H1 (cell line): ENCODE measurements at regions of chr17 and their contacts with region 1.

Region 1: DNA sequence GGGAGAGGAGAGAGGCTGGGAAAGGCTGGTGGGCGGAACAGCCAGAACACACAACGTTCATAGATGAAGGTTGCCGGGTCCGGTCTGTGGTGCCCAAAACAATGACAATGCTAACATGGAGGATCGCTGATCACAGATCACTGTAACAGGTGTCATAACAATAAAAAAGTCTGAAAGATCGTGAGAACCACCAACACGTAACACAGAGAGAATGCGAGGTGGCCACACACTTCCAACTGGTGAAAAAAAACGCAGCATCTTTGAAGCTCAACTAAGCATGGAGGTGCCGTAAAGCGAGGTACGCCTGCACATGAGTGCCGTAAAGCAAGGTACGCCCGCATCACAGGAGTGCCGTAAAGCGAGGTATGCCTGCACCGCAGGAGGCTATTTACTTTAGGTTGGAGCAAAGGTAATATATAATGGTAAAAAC is 42.3 kb downstream of the ABR start:
- DNase-seq: no peak
- H3K4me3 ChIP-seq: no peak overlapping the region
- H3K27ac ChIP-seq: no peak overlapping the region
- H3K4me1 ChIP-seq: no peaks in the 10 kb centered on the region
- H3K27me3 ChIP-seq: no peaks in the 10 kb centered on the region
- CTCF ChIP-seq: no peak
- EP300 ChIP-seq: no peak
- POLR2A ChIP-seq: no peak
- RAD21 ChIP-seq: no peak

Region 2: DNA sequence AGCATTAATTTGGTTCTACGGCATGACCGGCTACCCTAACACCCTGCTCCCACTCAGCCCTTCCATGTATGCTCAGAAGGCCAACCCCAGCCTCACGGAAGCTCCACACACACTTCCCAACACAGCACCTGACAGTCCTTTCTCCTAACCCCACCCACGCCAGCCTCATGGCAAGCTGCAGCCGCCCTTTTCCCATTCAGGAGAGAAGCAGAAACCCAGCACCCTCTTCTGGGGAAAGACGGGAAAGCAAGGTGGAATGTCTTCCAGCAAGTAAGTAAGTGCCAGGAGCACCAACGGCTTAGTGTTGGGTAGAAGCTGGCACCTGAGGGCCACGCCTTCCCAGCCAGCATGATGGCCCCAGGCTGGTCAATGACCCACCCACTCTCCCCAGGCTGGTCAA is 10.2 kb after region 1 on chr17:
- CTCF ChIA-PET with region 1: interaction called, 28 read pairs
- POLR2A ChIA-PET with region 1: interaction called, 3 read pairs
- DNase-seq: peak; percentile 60 to 87
- H3K4me3 ChIP-seq: no peak overlapping the region
- H3K27ac ChIP-seq: no peak overlapping the region
- H3K4me1 ChIP-seq: peaks cover 0 to 4% (median 1%) of the 10 kb centered on the region in 4 experiments; a peak in 2 of 7 replicates
- H3K27me3 ChIP-seq: no peaks in the 10 kb centered on the region
- CTCF ChIP-seq: peak; percentile 68 to 86 (median 72)
- EP300 ChIP-seq: no peak
- POLR2A ChIP-seq: no peak
- RAD21 ChIP-seq: peak; percentile 76 to 81

Region 3: GRCh38 chr17:1197781-1198490 is 60.5 kb after region 1 on chr17:
- CTCF ChIA-PET with region 1: no interaction called
- POLR2A ChIA-PET with region 1: no interaction called
- DNase-seq: no peak
- H3K4me3 ChIP-seq: no peak overlapping the region
- H3K27ac ChIP-seq: no peak overlapping the region
- H3K4me1 ChIP-seq: no peaks in the 10 kb centered on the region
- H3K27me3 ChIP-seq: peaks cover 0 to 3% (median 0%) of the 10 kb centered on the region in 4 experiments; a peak in 1 of 7 replicates
- CTCF ChIP-seq: no peak
- EP300 ChIP-seq: no peak
- POLR2A ChIP-seq: no peak
- RAD21 ChIP-seq: no peak